MCF 10A (cell line): ENCODE measurements at regions of chr14 and their contacts with region 1.

Region 1: DNA sequence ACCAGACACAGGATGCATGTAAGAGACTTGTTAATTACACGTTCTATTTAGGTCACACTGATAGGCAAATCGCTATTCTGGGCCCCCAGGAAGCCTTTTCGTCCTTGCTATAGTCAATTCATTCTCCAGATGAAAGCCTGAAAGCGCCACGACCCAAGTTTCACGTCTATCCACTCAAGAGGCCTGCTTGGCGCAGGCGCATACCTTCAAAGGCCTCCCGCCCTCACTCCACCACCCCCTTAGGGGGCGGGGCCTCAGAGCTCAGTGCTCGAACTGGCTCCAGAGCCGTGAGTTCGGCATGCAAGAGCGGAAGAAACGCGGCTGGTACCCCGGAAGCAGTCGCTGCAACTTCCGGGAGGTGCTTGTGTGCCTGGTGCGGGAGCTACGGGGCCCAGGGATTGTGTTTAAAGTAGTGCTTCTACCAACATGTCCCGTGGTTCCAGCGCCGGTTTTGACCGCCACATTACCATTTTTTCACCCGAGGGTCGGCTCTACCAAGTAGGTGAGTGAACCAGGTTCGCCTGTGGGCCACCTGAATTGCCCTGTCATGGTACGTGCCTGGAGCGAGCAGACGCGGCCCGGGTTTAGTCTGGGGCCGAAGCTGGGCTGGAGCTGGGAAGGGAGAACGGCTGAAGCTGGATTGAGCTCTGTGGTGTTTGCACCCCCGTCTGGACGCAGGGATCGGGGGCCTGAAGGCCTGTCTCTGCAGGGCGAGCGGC is at the start of gene PSMA6:
- DNase-seq: peak; percentile 99
- H3K4me3 Mint-ChIP-seq: peak within 1 kb of the TSS; percentile 91
- H3K27ac Mint-ChIP-seq: peak within 1 kb of the TSS; percentile 96
- H3K4me1 Mint-ChIP-seq: peaks cover 11% of the 10 kb centered on the region
- H3K27me3 Mint-ChIP-seq: no peaks in the 10 kb centered on the region
- CTCF ChIP-seq: no peak
- total RNA-seq, gene PSMA6: 260 and 322 TPM in 2 replicates

Region 2: GRCh38 chr14:34982417-34983147 is 309.6 kb before region 1 on chr14 and contains the start of gene SRP54:
- CTCF ChIA-PET with region 1: no interaction called
- POLR2A ChIA-PET with region 1: interaction called, 15 read pairs
- intact Hi-C with region 1: no loop called
- DNase-seq: peak; percentile 98
- H3K4me3 Mint-ChIP-seq: no peak within 1 kb of the TSS
- H3K27ac Mint-ChIP-seq: no peak within 1 kb of the TSS
- H3K4me1 Mint-ChIP-seq: peaks cover 5% of the 10 kb centered on the region
- H3K27me3 Mint-ChIP-seq: no peaks in the 10 kb centered on the region
- CTCF ChIP-seq: no peak
- total RNA-seq, gene SRP54: 77.4 and 108 TPM in 2 replicates

Region 3: DNA sequence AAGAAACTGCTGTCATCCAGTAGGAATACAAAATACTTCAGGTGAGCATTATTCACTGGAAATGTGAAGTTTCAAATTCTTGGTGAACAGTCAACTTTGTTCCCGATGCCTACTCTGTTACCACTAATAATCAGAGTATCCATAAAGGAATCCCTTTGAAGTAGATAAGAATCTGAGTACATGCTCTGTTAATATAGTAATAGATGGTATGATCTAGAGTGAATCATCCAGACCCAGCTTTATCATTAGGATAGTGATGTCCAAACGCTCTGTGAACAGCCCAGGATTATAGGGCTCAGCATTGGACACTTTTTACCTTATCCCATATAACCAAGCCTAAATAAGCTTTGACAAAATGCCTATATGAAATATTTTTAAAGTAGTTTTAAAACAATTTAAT is 203.7 kb before region 1 on chr14:
- CTCF ChIA-PET with region 1: no interaction called
- POLR2A ChIA-PET with region 1: no interaction called
- intact Hi-C with region 1: no loop called
- DNase-seq: no peak
- H3K4me3 Mint-ChIP-seq: no peak overlapping the region
- H3K27ac Mint-ChIP-seq: no peak overlapping the region
- H3K4me1 Mint-ChIP-seq: no peaks in the 10 kb centered on the region
- H3K27me3 Mint-ChIP-seq: no peaks in the 10 kb centered on the region
- CTCF ChIP-seq: no peak

Region 4: DNA sequence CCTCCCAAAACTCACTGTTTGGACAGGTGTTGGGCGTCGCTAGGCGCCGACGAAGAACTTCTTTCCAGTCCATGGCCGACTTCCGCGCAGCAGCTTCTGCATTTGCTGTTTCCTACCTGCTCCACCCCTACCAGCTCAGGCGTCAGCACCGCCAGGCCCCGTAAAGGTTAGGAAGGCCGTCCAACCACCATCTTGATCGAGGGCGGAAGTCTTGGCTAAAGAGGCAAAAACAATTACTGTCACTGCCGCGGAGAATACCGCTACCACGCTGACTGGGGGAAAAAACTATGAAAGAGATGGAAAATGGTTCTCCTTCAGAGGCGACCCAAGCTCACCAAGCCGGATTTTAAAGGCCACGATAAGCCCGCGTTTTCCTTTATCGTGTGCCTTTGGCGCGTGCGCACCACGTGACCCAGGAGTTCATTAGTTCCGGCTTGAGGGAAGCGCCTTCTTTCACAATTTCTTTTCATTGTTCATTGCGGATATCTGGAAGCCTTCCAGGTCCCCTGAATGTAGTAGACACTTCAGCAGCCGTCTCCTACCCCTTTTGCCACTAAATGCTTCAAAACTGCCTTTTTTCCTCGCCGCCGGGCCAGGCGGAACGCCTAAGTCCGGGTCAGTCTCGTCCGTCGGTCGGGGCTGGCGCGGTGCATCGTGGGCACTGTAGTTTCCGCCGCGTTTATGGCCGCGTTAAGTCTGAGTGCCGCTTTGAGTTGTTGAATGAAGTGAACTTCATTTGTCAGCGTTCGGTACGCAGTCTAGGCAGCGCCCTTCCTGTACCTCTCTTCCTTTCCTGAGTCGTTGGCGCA is 170.1 kb before region 1 on chr14 and contains the starts of genes PPP2R3C and PRORP:
- CTCF ChIA-PET with region 1: no interaction called
- POLR2A ChIA-PET with region 1: interaction called, 48 read pairs
- intact Hi-C with region 1: loop called (anchors 2 kb)
- DNase-seq: peak; percentile 99
- H3K4me3 Mint-ChIP-seq: peak within 1 kb of the TSS; percentile 98
- H3K27ac Mint-ChIP-seq: peak within 1 kb of the TSS; percentile 100
- H3K4me1 Mint-ChIP-seq: peaks cover 31% of the 10 kb centered on the region
- H3K27me3 Mint-ChIP-seq: no peaks in the 10 kb centered on the region
- CTCF ChIP-seq: no peak
- total RNA-seq, gene PPP2R3C: 16.9 and 21.6 TPM in 2 replicates
- total RNA-seq, gene PRORP: 27.9 and 30.5 TPM in 2 replicates

Region 5: GRCh38 chr14:35215110-35215876 is 76.9 kb before region 1 on chr14:
- CTCF ChIA-PET with region 1: interaction called, 4 read pairs
- POLR2A ChIA-PET with region 1: interaction called, 30 read pairs
- intact Hi-C with region 1: loop called (anchors 2 kb)
- DNase-seq: peak; percentile 61
- H3K4me3 Mint-ChIP-seq: no peak overlapping the region
- H3K27ac Mint-ChIP-seq: peak overlapping the region; percentile 75
- H3K4me1 Mint-ChIP-seq: peaks cover 30% of the 10 kb centered on the region
- H3K27me3 Mint-ChIP-seq: no peaks in the 10 kb centered on the region
- CTCF ChIP-seq: peak; percentile 24

Region 6: DNA sequence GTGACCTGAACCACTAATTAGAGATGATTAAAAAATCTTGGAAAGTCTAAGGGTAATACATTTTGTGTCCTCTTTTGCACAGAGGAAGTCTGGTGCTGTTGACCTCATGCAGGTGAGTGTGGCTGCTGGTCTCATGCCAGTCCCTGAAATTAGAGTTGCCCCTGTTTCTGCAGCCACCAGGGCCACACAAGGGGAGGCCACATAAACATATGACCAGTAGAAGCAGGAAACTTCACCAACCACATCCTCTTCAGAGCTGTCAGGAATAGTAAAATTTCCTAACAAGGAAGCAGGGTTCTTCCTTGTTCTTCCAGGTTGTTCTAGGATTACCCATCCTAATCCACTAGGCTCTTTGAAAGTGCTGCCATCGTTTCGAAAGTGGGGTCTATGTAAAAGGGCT is 28.3 kb after region 1 on chr14:
- CTCF ChIA-PET with region 1: interaction called, 3 read pairs
- POLR2A ChIA-PET with region 1: interaction called, 12 read pairs
- intact Hi-C with region 1: no loop called
- DNase-seq: no peak
- H3K4me3 Mint-ChIP-seq: no peak overlapping the region
- H3K27ac Mint-ChIP-seq: no peak overlapping the region
- H3K4me1 Mint-ChIP-seq: no peaks in the 10 kb centered on the region
- H3K27me3 Mint-ChIP-seq: no peaks in the 10 kb centered on the region
- CTCF ChIP-seq: no peak

Region 7: DNA sequence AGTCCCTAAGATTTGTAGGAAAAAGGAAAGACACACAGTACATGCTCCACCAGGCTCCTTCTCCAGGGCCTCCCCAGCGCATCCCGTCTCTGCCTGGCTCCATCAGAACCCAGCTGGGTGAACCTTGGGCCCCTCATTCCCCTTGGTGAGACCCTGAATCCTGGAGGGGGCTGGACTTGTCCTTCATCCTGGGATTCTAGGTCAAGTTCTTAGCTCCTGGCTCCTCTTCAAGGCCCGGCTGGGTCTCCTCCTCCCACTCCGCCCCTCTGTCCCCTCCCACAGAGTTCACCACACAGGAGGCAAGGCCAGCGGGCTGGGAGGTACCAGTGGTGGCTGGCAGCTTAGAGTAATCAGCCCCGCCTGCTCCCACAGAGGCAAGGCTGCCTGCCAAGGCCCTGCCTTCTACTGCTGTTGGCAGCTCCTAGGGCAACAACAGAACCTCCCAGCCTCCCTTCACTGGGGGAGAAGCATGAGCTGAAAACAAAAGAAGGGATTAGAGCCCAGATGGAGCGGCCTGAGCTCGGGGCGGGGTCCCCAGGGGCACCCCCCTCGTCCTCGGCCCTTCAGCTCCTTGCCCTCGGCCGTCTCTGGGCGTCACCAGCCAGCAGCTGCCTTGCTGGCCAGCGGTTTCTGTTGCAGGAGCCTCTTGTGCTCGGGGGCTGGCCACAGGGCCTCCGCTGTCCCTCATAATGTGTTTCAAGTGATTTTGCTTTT is 49.4 kb after region 1 on chr14:
- CTCF ChIA-PET with region 1: interaction called, 7 read pairs
- POLR2A ChIA-PET with region 1: interaction called, 45 read pairs
- intact Hi-C with region 1: loop called (anchors 2 kb)
- DNase-seq: peak; percentile 98
- H3K4me3 Mint-ChIP-seq: peak overlapping the region; percentile 59
- H3K27ac Mint-ChIP-seq: peak overlapping the region; percentile 88
- H3K4me1 Mint-ChIP-seq: peaks cover 29% of the 10 kb centered on the region
- H3K27me3 Mint-ChIP-seq: no peaks in the 10 kb centered on the region
- CTCF ChIP-seq: no peak

Region 8: GRCh38 chr14:35374273-35374681 is 82.1 kb after region 1 on chr14:
- CTCF ChIA-PET with region 1: no interaction called
- POLR2A ChIA-PET with region 1: interaction called, 30 read pairs
- intact Hi-C with region 1: no loop called
- DNase-seq: peak; percentile 99
- H3K4me3 Mint-ChIP-seq: peak overlapping the region; percentile 4
- H3K27ac Mint-ChIP-seq: peak overlapping the region; percentile 92
- H3K4me1 Mint-ChIP-seq: peaks cover 12% of the 10 kb centered on the region
- H3K27me3 Mint-ChIP-seq: no peaks in the 10 kb centered on the region
- CTCF ChIP-seq: no peak